IMR-90 (cell line): ENCODE measurements at regions of chr20 and their contacts with region 1.

Region 1: GRCh38 chr20:47392015-47392720 is 35.7 kb upstream of the ZMYND8 start:
- DNase-seq: peak; percentile 97
- ATAC-seq: peak; percentile 98
- H3K4me3 ChIP-seq: no peak overlapping the region
- H3K27ac ChIP-seq: peak overlapping the region; percentile 87
- H3K4me1 ChIP-seq: peaks cover 7% of the 10 kb centered on the region
- H3K27me3 ChIP-seq: no peaks in the 10 kb centered on the region
- CTCF ChIP-seq: no peak
- POLR2A ChIP-seq: no peak
- RAD21 ChIP-seq: no peak

Region 2: GRCh38 chr20:47055699-47056369 is 336.3 kb before region 1 on chr20:
- CTCF ChIA-PET with region 1: no interaction called
- POLR2A ChIA-PET with region 1: no interaction called
- dilution Hi-C with region 1: no loop called
- in situ Hi-C with region 1: no loop called
- intact Hi-C with region 1: no loop called
- DNase-seq: peak; percentile 66
- ATAC-seq: no peak
- H3K4me3 ChIP-seq: no peak overlapping the region
- H3K27ac ChIP-seq: no peak overlapping the region
- H3K4me1 ChIP-seq: peaks cover 2% of the 10 kb centered on the region; the same call in 1 of the 2 replicates
- H3K27me3 ChIP-seq: no peaks in the 10 kb centered on the region
- CTCF ChIP-seq: no peak
- POLR2A ChIP-seq: no peak
- RAD21 ChIP-seq: no peak

Region 3: GRCh38 chr20:47464380-47465101 is 72.4 kb after region 1 on chr20:
- CTCF ChIA-PET with region 1: no interaction called
- POLR2A ChIA-PET with region 1: interaction called, 13 read pairs
- dilution Hi-C with region 1: no loop called
- in situ Hi-C with region 1: no loop called
- intact Hi-C with region 1: no loop called
- DNase-seq: peak; percentile 99
- ATAC-seq: peak; percentile 95
- H3K4me3 ChIP-seq: no peak overlapping the region
- H3K27ac ChIP-seq: no peak overlapping the region
- H3K4me1 ChIP-seq: peaks cover 3% of the 10 kb centered on the region; the same call in 1 of the 2 replicates
- H3K27me3 ChIP-seq: no peaks in the 10 kb centered on the region
- CTCF ChIP-seq: peak; percentile 64
- POLR2A ChIP-seq: no peak
- RAD21 ChIP-seq: peak; percentile 50